Colonic mucosa (tissue), 4 donors: ENCODE measurements at regions of chr2 and their contacts with region 1.

Region 1: GRCh38 chr2:20225294-20226151 is 593 bp upstream of the SDC1 start:
- DNase-seq: peak; percentile 88
- H3K4me3 ChIP-seq: peak overlapping the region; percentile 80
- H3K27ac ChIP-seq: peak overlapping the region; percentile 93
- H3K4me1 ChIP-seq: peaks cover 4% of the 10 kb centered on the region
- H3K27me3 ChIP-seq: no peaks in the 10 kb centered on the region
- CTCF ChIP-seq: peak; percentile 47

Region 2: GRCh38 chr2:20106746-20107145 is 118.8 kb before region 1 on chr2:
- intact Hi-C with region 1: loop called (anchors 10 kb)
- DNase-seq: peak; percentile 63
- H3K4me3 ChIP-seq: no peak overlapping the region
- H3K27ac ChIP-seq: no peak overlapping the region
- H3K4me1 ChIP-seq: peaks cover 4% of the 10 kb centered on the region
- H3K27me3 ChIP-seq: no peaks in the 10 kb centered on the region
- CTCF ChIP-seq: peak; percentile 14

Region 3: DNA sequence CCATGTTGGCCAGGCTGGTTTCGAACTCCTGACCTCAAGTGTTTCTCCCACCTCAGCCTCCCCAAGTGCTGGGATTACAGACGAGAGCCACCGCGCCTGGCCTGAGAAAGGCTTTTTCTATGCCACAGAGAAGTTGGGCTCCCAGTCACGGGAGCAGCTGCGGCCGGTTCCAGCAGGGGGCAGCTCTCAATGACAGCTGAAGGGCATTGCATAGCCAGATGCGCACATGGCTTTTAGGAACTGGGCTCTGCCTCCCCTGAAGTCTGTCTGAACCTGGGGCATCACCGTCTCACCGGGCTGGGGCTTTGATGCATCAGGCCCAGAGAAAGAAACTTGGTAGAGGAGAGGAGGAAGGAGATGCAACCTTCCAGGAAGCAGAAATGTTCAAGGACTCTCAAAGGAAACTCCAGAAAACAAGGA is 89.9 kb before region 1 on chr2:
- intact Hi-C with region 1: loop called (anchors 10 kb)
- DNase-seq: peak; percentile 84
- H3K4me3 ChIP-seq: no peak overlapping the region
- H3K27ac ChIP-seq: no peak overlapping the region
- H3K4me1 ChIP-seq: peaks cover 1% of the 10 kb centered on the region
- H3K27me3 ChIP-seq: no peaks in the 10 kb centered on the region
- CTCF ChIP-seq: peak; percentile 37

Region 4: DNA sequence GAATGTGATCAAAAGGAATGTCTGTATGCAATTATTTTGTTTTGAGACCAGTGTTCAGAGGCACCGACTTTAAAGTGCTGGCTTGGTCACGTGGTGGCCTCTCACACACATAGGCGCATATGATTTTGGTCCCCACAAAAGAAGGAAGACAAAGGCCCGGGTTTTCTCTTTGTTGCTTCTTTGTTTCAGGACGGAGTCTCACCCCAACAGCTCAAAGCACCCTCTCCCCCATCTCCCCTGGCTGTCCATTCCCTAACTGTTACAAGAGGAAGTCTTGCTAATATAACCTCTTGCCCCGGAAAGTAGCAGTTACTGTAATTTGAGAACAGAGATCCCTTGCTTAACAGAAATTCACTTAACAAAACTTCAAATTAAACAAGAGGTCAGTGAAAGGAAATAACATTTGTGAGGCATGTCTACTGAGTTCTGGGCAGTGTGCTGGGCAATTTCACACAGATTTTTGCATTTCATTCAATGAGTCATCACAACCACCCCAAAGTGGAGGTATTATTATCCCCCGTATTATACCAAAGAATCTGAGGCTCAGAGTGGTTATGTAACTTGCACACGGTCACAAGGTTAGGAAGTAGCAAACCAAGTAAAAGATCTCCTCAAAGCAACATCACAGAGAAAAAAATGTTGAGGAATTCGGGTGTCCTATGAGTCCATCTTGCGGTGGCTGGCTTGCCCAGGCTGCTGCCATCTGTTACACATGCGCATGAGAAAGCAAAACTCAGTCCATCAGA is 76.4 kb before region 1 on chr2:
- intact Hi-C with region 1: no loop called
- DNase-seq: no peak
- H3K4me3 ChIP-seq: no peak overlapping the region
- H3K27ac ChIP-seq: no peak overlapping the region
- H3K4me1 ChIP-seq: no peaks in the 10 kb centered on the region
- H3K27me3 ChIP-seq: no peaks in the 10 kb centered on the region
- CTCF ChIP-seq: no peak

Region 5: GRCh38 chr2:21052044-21052443 is 826.5 kb after region 1 on chr2:
- intact Hi-C with region 1: no loop called
- DNase-seq: no peak
- H3K4me3 ChIP-seq: no peak overlapping the region
- H3K27ac ChIP-seq: no peak overlapping the region
- H3K4me1 ChIP-seq: no peaks in the 10 kb centered on the region
- H3K27me3 ChIP-seq: no peaks in the 10 kb centered on the region
- CTCF ChIP-seq: no peak